ENCODE measurements at regions of chr20 and their contacts with region 1.

Region 1: DNA sequence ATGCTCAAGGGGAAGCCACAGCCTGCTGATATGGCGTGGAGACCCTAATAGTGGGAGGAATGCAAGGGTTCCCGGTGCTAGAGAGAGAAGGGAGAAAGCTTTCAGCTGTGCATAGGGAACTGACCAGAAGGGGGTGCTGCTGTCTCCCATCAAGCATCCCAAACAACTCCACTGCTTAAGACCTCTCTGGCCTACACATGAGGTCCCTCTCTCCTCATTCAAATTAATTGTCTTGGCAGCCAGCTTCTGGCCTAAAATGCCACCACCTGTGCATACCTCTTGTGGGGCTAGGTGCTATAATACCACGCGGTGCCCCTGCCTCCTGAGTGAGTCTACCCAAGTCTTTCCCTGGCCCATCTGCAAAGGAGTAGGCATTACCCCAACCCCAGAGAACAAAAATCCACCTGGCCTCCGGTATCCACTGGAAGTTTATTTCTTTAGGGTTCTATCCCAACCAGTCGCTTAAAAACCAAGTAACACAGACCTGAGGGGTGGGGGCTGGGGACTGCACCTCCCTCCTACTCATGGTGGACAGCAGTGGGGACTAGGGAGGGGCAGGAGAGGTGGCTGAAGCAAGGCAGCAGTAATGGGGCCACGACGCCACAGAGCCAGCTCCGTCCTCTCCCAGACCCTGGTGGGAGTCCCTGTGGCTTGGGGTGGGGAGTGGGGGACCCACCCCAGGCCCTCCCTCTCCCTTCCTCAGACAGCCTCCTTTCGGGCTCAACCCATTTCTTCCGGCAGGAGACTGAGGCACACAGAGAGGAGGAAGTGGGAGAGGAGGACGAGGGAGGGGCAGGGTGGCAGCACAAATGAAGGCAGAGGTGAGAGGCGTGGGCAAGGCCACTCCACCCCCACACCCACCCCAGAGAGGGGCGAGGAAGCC is 14.2 kb downstream of the ADISSP start:
- DNase-seq: peak; percentile 72
- H3K4me3 ChIP-seq: no peak overlapping the region
- H3K27ac ChIP-seq: no peak overlapping the region
- H3K4me1 ChIP-seq: no peaks in the 10 kb centered on the region
- H3K27me3 ChIP-seq: no peaks in the 10 kb centered on the region
- CTCF ChIP-seq: peak; percentile 85

Region 2: GRCh38 chr20:3612795-3613572 is 140.4 kb before region 1 on chr20:
- CTCF ChIA-PET with region 1: no interaction called
- POLR2A ChIA-PET with region 1: no interaction called
- intact Hi-C with region 1: no loop called
- DNase-seq: no peak
- H3K4me3 ChIP-seq: no peak overlapping the region
- H3K27ac ChIP-seq: no peak overlapping the region
- H3K4me1 ChIP-seq: no peaks in the 10 kb centered on the region
- H3K27me3 ChIP-seq: no peaks in the 10 kb centered on the region
- CTCF ChIP-seq: 0 out of 2 replicates have a peak, but pooled peaks have one; percentile 16

Region 3: DNA sequence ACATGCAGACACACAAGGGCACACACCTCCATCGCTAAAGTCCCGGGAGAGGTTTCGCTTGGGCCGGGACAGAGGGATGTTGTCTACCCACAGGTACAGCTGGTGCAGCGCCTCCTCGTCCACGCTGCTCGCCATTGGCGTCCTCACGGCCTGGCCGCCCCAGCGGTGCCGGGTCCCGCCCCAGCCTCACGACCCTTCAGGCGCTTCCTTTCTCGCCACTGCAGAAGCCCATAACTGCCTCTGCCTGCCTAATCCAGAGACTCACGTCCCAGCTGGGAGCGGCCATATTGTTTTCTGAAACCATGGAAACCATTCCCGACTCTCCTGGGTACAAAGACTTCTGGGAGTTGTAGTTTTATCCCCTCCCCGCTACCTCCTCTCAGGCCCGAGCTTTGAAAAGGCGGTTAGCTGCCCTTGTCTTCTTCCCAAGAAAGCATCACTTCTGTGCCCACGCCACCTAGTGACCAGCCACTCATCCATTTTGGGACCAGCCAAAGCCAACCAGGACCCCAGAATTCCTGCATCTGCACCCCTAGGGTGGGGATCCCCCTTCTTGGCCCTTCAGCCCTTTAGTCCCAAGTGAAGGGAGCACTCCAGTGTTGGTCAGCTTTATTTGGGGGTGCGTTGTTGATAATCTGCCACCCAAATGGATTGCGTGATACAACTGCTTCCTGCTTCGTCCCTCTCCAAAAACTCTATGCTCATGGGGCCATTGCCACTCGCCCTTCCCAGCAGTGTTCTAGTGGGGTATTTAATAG is 28.0 kb after region 1 on chr20 and contains the start of gene SPEF1:
- CTCF ChIA-PET with region 1: interaction called, 4 read pairs
- POLR2A ChIA-PET with region 1: no interaction called
- intact Hi-C with region 1: loop called (anchors 1 kb)
- DNase-seq: peak; percentile 98
- H3K4me3 ChIP-seq: peak within 1 kb of the TSS; percentile 40
- H3K27ac ChIP-seq: no peak within 1 kb of the TSS
- H3K4me1 ChIP-seq: peaks cover 35% of the 10 kb centered on the region
- H3K27me3 ChIP-seq: peaks cover 12% of the 10 kb centered on the region
- CTCF ChIP-seq: peak; percentile 67
- total RNA-seq, gene SPEF1: 0.26 and 0.49 TPM in 2 replicates